Activated B cell treated with CpG ODN at 0.5 μM for 24 hours (primary cell): ENCODE measurements at regions of chr19 and their contacts with region 1.

Region 1: DNA sequence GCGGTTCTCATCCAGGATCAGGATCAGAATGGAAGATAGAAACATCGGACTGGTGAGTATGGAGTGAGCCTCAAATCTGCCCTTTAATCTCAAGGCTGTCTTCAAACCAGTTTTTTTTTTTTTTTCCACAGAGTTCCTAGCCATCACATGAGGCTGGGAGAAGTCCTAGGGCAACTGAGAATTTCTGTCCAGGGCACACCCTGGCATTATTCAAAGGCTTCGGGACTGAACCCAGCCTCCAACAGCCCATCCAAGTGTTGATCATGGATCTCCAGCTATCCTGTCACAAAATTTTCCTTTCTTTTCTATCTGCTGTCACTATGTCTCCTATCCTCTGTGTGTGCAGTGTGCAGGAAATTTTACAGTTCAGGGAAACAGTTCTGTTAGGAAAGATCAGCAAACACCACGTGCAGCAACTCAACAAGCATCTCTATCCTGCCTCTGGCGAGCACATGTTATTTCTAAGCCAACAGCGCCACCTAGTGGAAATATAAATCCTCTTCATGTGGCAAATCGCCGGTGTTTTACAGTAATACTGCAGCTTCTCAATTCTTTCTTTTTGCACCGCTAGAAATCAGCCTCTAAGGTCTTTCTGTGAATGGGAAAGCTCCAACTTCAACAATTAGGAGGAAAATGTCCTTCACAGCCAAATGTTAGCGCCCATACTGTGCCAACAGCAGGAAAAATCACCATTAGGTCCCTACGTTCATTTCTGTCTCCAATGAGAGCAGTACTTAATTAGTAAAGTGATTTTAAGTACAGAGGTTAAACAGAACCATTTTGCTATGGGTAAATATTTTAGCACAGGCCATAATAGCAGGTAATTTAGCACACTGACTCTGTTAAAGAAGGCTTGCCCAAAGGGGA is 21.4 kb upstream of the ZNF181 start:
- DNase-seq: no peak
- ATAC-seq: peak; percentile 49
- H3K4me3 Mint-ChIP-seq: no peak overlapping the region
- H3K27ac Mint-ChIP-seq: no peak overlapping the region
- H3K4me1 Mint-ChIP-seq: no peaks in the 10 kb centered on the region
- H3K27me3 Mint-ChIP-seq: peaks cover 18% of the 10 kb centered on the region
- CTCF ChIP-seq: peak; percentile 61

Region 2: DNA sequence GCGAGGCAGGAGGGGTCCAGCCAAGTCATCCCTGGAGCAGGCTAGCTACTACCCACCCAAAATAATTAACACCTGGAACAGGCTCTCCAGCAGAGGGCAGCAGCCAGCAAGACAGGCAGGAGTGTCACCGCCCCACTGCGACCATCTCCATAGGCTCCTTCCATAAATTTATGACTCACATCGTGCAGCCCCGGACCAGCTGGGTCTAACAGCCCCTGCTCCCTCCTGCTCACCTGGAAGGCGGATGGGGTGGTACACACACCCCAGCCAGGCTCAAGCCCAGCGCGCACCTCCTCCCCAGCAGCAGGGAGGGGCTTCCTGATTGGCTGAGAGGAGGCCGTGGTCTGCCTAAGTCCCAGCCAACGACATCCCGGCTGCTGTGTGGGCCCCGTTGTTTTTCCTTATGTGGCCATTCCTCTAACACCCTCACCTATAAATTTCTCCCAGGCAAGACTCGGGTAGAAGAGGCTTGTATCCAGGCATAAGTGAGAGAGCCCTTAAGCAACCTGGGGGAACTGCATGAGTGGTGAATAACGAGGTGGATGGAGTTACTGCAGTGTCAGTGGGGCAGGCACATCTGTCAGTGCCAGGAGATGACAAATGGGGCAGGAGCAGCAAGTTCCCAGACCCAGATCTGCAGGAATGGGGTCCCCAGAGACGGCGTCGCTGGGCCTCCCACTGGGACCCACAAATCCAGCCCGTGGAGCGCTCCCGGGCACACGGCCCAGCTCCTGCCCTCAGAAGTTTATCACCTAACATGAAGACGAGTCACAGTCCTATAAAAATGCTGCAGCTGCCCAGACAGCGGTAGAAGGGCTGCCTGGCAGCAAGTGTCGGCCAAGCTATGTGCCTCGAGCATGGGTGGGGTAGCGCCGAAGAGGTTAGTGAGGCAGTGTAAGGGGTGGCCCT is 1296.1 kb before region 1 on chr19:
- CTCF ChIA-PET with region 1: no interaction called
- POLR2A ChIA-PET with region 1: no interaction called
- intact Hi-C with region 1: loop called (anchors 2 kb)
- DNase-seq: peak; percentile 48
- ATAC-seq: peak; percentile 83
- H3K4me3 Mint-ChIP-seq: peak overlapping the region; percentile 58
- H3K27ac Mint-ChIP-seq: no peak overlapping the region
- H3K4me1 Mint-ChIP-seq: peaks cover 5% of the 10 kb centered on the region
- H3K27me3 Mint-ChIP-seq: no peaks in the 10 kb centered on the region
- CTCF ChIP-seq: no peak

Region 3: DNA sequence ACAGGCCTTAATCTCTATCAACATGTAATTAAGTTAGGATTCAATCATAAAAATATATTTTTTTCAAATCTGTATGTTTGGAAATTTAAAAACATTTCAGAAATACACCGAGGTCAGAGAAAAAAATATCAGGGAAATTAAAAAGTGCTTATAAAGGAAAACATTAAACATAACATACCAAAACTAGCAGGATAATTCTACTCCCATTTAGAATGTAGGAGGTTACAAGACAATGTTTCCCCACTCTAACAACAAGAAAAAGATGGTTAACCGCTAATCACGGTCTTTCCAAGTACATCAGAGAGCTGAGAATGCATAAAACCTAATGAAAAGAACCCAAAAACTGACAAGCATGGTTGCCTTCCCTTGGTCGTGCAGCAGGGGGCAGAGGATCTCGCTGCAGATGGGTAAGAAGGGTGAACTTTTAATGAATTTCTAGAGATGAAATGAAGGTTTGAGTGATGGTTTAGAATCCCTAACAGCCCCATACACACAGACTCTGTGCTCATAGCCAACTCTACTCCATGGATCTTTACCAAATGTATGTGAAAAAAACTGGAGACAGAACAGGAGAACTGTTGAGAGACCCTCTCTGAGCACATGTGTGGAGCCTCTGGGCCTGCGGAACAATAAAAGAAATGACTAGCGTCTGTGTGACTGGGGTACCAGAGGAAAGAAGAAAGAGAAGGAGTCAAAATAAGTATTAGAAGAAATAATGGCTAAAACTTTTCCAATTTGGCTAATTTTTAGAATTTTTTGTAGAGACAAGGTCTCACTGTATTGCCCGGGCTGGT is 591.6 kb before region 1 on chr19:
- CTCF ChIA-PET with region 1: no interaction called
- POLR2A ChIA-PET with region 1: no interaction called
- intact Hi-C with region 1: loop called (anchors 2 kb)
- DNase-seq: no peak
- ATAC-seq: peak; percentile 56
- H3K4me3 Mint-ChIP-seq: no peak overlapping the region
- H3K27ac Mint-ChIP-seq: no peak overlapping the region
- H3K4me1 Mint-ChIP-seq: no peaks in the 10 kb centered on the region
- H3K27me3 Mint-ChIP-seq: peaks cover 12% of the 10 kb centered on the region
- CTCF ChIP-seq: no peak

Region 4: GRCh38 chr19:34639491-34640085 is 73.0 kb before region 1 on chr19:
- CTCF ChIA-PET with region 1: interaction called, 70 read pairs
- POLR2A ChIA-PET with region 1: no interaction called
- intact Hi-C with region 1: loop called (anchors 1 kb)
- DNase-seq: no peak
- ATAC-seq: peak; percentile 49
- H3K4me3 Mint-ChIP-seq: no peak overlapping the region
- H3K27ac Mint-ChIP-seq: no peak overlapping the region
- H3K4me1 Mint-ChIP-seq: no peaks in the 10 kb centered on the region
- H3K27me3 Mint-ChIP-seq: no peaks in the 10 kb centered on the region
- CTCF ChIP-seq: peak; percentile 86

Region 5: DNA sequence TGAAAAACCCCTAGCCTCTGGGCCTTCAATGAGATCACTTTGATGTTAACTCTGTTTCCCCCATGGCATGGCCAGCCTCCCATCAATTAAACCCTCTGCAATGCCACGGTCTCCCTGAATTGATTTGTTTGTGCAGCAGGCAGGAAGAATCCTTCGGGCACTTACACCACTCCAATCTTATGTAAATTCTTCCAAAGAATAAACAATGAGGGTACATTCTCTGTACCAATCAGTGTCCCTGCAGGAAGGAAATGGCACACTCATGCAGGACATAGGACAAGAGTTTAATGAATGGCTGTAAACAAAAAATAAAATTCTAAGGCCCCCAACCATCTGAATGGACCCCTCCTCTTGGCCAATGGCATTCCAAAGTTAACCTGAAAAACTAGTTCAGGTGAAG is 57.8 kb before region 1 on chr19:
- CTCF ChIA-PET with region 1: no interaction called
- POLR2A ChIA-PET with region 1: no interaction called
- intact Hi-C with region 1: no loop called
- DNase-seq: no peak
- ATAC-seq: no peak
- H3K4me3 Mint-ChIP-seq: no peak overlapping the region
- H3K27ac Mint-ChIP-seq: no peak overlapping the region
- H3K4me1 Mint-ChIP-seq: peaks cover 3% of the 10 kb centered on the region
- H3K27me3 Mint-ChIP-seq: peaks cover 4% of the 10 kb centered on the region
- CTCF ChIP-seq: no peak